GM12878 (cell line): ENCODE measurements at regions of chrX and their contacts with region 1.

Region 1: DNA sequence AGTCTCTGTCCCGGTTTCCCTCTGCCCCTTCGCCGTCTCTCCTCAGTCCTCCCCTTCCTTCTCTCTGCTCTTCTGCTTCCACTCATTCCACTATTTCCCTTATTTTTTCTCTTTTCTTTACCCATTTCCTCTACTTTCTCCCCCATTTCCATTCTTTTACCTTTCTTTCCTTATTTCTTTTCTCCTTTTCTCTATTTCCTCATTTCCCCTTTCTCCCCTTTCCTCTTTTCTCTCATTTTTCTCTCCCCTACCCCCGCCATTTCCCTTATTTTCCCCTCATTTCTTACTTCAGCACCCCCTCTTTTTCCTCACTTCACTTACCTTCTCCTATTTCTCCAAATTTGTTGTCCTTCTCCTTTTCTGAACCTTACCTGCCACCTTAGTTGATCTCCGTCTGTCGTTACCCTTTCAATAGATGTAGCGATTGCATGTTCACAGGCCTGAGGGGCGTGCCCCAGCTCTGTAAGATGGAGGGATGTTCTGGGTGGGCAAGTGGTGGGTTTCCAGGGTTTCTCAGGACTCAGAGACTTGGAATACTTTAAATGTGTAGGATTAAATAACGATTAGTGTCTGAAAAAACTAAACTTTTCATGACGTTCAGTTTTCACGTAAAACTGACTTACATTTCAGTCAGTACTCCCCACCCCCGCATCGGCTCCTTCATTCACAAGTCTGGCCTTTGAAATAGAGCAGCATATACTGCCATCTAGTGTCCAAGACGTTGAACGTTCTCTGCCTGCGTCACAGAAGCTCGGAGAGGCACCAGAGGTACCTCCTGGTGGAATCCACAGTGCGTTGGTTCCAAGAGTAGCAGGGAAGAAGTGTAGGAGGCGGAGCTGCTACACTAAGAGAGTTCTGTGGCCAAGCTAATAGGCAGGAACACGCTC is 641 bp upstream of the NCBP2L start:
- DNase-seq: peak; percentile 42
- ATAC-seq: peak; percentile 87
- H3K4me3 ChIP-seq: peak overlapping the region; percentile 58; the same call in 1 of the 2 replicates
- H3K27ac ChIP-seq: no peak overlapping the region
- H3K4me1 ChIP-seq: no peaks in the 10 kb centered on the region
- H3K27me3 ChIP-seq: no peaks in the 10 kb centered on the region; a peak in 1 of 4 replicates
- CTCF ChIP-seq: peak; percentile 65 to 85 (median 77)
- EP300 ChIP-seq: no peak
- POLR2A ChIP-seq: no peak
- RAD21 ChIP-seq: peak; percentile 91

Region 2: GRCh38 chrX:107025545-107025944 is 751.3 kb before region 1 on chrX:
- CTCF ChIA-PET with region 1: no interaction called
- POLR2A ChIA-PET with region 1: no interaction called
- RAD21 ChIA-PET with region 1: no interaction called
- SMC1A ChIA-PET with region 1: interaction called, 3 read pairs
- in situ Hi-C with region 1: no loop called
- intact Hi-C with region 1: loop called (anchors 10 kb)
- DNase-seq: no peak
- ATAC-seq: peak; percentile 60
- H3K4me3 ChIP-seq: no peak overlapping the region
- H3K27ac ChIP-seq: no peak overlapping the region
- H3K4me1 ChIP-seq: no peaks in the 10 kb centered on the region
- H3K27me3 ChIP-seq: no peaks in the 10 kb centered on the region
- CTCF ChIP-seq: peak; percentile 32 to 59 (median 50); a peak in 5 of 6 replicates
- EP300 ChIP-seq: no peak
- POLR2A ChIP-seq: no peak
- RAD21 ChIP-seq: peak; percentile 80

Region 3: DNA sequence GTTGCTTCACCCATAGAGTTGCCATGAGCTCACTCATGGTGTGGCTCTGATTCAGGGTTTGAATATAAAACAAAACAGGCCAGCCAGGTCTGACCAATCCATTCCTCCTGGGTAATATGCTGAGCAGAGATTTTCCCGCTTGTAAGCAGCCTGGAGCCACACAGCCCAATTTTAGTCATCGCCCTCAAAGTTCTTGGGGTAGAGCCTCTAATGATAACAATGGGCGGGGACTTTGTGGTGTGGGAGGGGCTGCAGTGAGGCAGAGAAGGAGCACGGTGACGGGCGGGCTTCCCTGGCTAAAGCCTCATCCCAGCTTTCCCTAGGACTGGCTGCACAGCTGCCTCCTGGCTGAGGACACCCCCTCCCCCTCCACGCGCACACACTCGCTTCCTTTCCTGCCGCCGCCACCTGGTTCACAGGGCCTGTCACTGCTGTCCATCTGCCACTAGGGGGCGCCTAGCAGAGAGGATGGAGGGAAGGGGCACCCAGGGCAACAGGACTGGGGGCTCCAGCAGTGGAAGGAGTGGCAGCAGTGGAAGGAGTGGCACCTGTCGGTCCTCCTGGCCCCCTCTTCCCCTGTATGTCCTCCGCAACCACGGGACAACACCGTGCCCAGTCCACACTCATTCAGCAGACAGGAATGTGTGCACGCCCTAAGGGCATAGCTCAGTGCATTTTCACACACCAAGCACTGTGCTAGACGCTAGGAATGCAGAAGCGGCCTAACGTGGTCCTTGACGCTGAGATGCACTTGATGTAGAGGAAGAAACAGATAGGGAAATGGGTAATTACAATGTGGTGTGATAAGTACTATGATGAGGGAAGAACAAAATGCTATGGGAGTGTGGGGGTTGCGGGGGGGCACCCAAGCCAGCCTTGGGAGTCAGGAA is 121.8 kb before region 1 on chrX:
- CTCF ChIA-PET with region 1: interaction called, 289 read pairs
- POLR2A ChIA-PET with region 1: interaction called, 8 read pairs
- RAD21 ChIA-PET with region 1: interaction called, 119 read pairs
- SMC1A ChIA-PET with region 1: interaction called, 149 read pairs
- in situ Hi-C with region 1: loop called (anchors 5 kb)
- intact Hi-C with region 1: loop called (anchors 1 kb)
- DNase-seq: no peak
- ATAC-seq: peak; percentile 96
- H3K4me3 ChIP-seq: no peak overlapping the region
- H3K27ac ChIP-seq: no peak overlapping the region
- H3K4me1 ChIP-seq: no peaks in the 10 kb centered on the region
- H3K27me3 ChIP-seq: no peaks in the 10 kb centered on the region
- CTCF ChIP-seq: peak; percentile 61 to 90 (median 80)
- EP300 ChIP-seq: no peak
- POLR2A ChIP-seq: peak; percentile 49; the same call in 1 of the 2 replicates
- RAD21 ChIP-seq: peak; percentile 40

Region 4: GRCh38 chrX:107716816-107717700 is 59.8 kb before region 1 on chrX:
- CTCF ChIA-PET with region 1: interaction called, 35 read pairs
- POLR2A ChIA-PET with region 1: interaction called, 6 read pairs
- RAD21 ChIA-PET with region 1: interaction called, 48 read pairs
- SMC1A ChIA-PET with region 1: interaction called, 36 read pairs
- in situ Hi-C with region 1: no loop called
- intact Hi-C with region 1: loop called (anchors 1 kb)
- DNase-seq: peak; percentile 64
- ATAC-seq: peak; percentile 71
- H3K4me3 ChIP-seq: peak overlapping the region; percentile 81
- H3K27ac ChIP-seq: peak overlapping the region; percentile 86
- H3K4me1 ChIP-seq: peaks cover 17% of the 10 kb centered on the region
- H3K27me3 ChIP-seq: no peaks in the 10 kb centered on the region; a peak in 1 of 4 replicates
- CTCF ChIP-seq: no peak
- EP300 ChIP-seq: peak; percentile 56 to 73; a peak in 2 of 4 replicates
- POLR2A ChIP-seq: peak; percentile 98
- RAD21 ChIP-seq: no peak

Region 5: DNA sequence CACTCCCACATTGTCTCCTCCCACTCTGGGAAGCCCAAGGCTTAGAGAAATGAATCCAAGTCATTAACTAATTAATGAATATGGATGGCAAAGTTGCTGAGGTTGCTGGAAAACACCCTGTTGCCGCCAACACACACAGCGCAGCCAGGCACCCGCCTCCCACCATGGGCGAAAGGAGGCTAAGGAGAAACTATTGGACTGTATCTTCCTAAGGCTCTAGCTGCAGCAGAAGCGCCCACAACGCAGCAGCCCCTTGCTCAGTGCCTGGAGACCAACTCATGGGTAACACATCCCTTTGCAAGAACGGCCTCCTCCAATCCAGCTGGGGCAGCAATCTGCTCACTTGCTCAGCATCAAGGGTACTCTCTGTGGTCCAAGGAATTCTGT is 35.5 kb before region 1 on chrX:
- CTCF ChIA-PET with region 1: interaction called, 4 read pairs
- POLR2A ChIA-PET with region 1: no interaction called
- RAD21 ChIA-PET with region 1: interaction called, 14 read pairs
- SMC1A ChIA-PET with region 1: interaction called, 14 read pairs
- in situ Hi-C with region 1: no loop called
- intact Hi-C with region 1: no loop called
- DNase-seq: no peak
- ATAC-seq: no peak
- H3K4me3 ChIP-seq: peak overlapping the region; percentile 32; the same call in 1 of the 2 replicates
- H3K27ac ChIP-seq: no peak overlapping the region
- H3K4me1 ChIP-seq: peaks cover 6% of the 10 kb centered on the region
- H3K27me3 ChIP-seq: no peaks in the 10 kb centered on the region; a peak in 1 of 4 replicates
- CTCF ChIP-seq: no peak
- EP300 ChIP-seq: no peak
- POLR2A ChIP-seq: no peak
- RAD21 ChIP-seq: no peak

Region 6: DNA sequence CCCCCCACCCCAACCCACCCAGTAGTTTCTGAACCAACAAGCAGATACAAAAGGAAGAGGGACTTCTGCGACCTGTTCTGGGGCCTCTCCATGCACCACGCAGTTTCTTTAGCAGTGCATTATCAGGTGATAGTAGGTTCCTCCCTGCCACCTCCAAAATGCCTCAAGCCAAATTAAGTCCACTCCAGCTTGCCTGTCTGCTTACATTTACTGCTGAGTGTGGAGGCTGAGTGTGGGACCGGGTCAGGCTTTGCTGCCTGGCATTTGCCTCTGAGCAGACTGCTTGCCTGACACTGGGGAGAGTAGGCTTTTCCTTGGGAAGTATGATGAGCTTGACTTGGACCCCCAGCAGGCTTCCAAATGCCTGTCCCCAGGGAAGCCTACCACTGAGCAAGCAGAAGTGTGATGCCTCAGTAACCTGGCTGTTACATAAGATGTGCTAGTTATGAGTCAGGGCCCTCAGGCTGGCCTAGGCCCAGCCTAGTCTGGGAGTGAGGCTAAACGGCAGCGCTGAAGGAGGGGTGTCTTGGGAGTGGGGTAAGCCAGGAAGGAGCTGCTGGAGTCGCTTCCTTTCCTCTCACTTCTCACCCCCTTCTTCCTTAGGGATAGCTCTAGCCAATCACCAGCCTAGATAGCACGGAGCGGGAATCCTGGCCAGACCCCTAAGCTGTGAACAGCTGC is 10.3 kb before region 1 on chrX:
- CTCF ChIA-PET with region 1: interaction called, 16 read pairs
- POLR2A ChIA-PET with region 1: interaction called, 5 read pairs
- RAD21 ChIA-PET with region 1: interaction called, 19 read pairs
- SMC1A ChIA-PET with region 1: interaction called, 20 read pairs
- in situ Hi-C with region 1: no loop called
- intact Hi-C with region 1: no loop called
- DNase-seq: no peak
- ATAC-seq: peak; percentile 73
- H3K4me3 ChIP-seq: no peak overlapping the region
- H3K27ac ChIP-seq: no peak overlapping the region
- H3K4me1 ChIP-seq: no peaks in the 10 kb centered on the region
- H3K27me3 ChIP-seq: no peaks in the 10 kb centered on the region
- CTCF ChIP-seq: no peak
- EP300 ChIP-seq: no peak
- POLR2A ChIP-seq: no peak
- RAD21 ChIP-seq: no peak

Region 7: GRCh38 chrX:108601266-108601665 is 824.4 kb after region 1 on chrX:
- CTCF ChIA-PET with region 1: no interaction called
- POLR2A ChIA-PET with region 1: no interaction called
- RAD21 ChIA-PET with region 1: no interaction called
- SMC1A ChIA-PET with region 1: no interaction called
- in situ Hi-C with region 1: no loop called
- intact Hi-C with region 1: no loop called
- DNase-seq: no peak
- ATAC-seq: no peak
- H3K4me3 ChIP-seq: no peak overlapping the region
- H3K27ac ChIP-seq: no peak overlapping the region
- H3K4me1 ChIP-seq: no peaks in the 10 kb centered on the region
- H3K27me3 ChIP-seq: no peaks in the 10 kb centered on the region
- CTCF ChIP-seq: no peak
- EP300 ChIP-seq: no peak
- POLR2A ChIP-seq: no peak
- RAD21 ChIP-seq: no peak